ENCODE measurements at regions of chr2 and their contacts with region 1.

Region 1: GRCh38 chr2:184936761-184937160 is 338.4 kb downstream of the ZNF804A start:
- DNase-seq: no peak
- H3K4me3 ChIP-seq: no peak overlapping the region
- H3K27ac ChIP-seq: no peak overlapping the region
- H3K4me1 ChIP-seq: no peaks in the 10 kb centered on the region
- H3K27me3 ChIP-seq: no peaks in the 10 kb centered on the region
- CTCF ChIP-seq: no peak
- POLR2A ChIP-seq: no peak

Region 2: GRCh38 chr2:185006512-185006911 is 69.8 kb after region 1 on chr2:
- intact Hi-C with region 1: loop called (anchors 2 kb)
- DNase-seq: no peak
- H3K4me3 ChIP-seq: no peak overlapping the region
- H3K27ac ChIP-seq: no peak overlapping the region
- H3K4me1 ChIP-seq: no peaks in the 10 kb centered on the region
- H3K27me3 ChIP-seq: no peaks in the 10 kb centered on the region
- CTCF ChIP-seq: no peak
- POLR2A ChIP-seq: no peak